SK-N-SH (cell line): ENCODE measurements at regions of chr2 and their contacts with region 1.

Region 1: DNA sequence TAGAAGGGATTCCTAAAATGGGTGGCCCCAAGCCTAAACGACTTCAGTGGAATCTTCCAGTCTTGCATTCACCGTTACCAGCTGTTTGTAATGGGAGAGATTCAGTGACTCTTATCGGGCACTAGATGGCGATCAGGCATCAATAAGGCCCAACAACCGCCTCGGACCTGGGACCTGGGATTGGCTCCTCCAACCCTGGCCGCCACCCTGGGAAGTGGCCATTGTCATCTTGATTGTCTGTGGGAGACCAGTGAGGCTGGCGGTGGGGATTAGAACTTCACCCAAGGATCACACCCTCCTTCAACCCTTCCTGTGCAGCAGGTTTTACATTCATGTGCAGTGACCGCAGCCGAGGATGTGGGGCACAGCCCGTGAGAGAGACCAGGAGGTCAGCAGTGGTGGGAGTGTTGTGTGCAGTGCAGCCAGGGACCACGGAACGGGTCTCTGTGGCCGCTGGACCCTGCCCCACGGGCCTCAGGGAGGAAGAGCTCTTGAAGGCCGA is 85.3 kb downstream of the SPP2 start:
- DNase-seq: peak; percentile 83
- H3K4me3 ChIP-seq: no peak overlapping the region; a peak in 1 of 4 replicates
- H3K27ac ChIP-seq: no peak overlapping the region
- H3K4me1 ChIP-seq: peaks cover 4 to 6% of the 10 kb centered on the region in 2 experiments; a peak in 1 of 4 replicates
- H3K27me3 ChIP-seq: no peaks in the 10 kb centered on the region
- CTCF ChIP-seq: peak; percentile 90
- EP300 ChIP-seq: no peak
- RAD21 ChIP-seq: peak; percentile 97

Region 2: DNA sequence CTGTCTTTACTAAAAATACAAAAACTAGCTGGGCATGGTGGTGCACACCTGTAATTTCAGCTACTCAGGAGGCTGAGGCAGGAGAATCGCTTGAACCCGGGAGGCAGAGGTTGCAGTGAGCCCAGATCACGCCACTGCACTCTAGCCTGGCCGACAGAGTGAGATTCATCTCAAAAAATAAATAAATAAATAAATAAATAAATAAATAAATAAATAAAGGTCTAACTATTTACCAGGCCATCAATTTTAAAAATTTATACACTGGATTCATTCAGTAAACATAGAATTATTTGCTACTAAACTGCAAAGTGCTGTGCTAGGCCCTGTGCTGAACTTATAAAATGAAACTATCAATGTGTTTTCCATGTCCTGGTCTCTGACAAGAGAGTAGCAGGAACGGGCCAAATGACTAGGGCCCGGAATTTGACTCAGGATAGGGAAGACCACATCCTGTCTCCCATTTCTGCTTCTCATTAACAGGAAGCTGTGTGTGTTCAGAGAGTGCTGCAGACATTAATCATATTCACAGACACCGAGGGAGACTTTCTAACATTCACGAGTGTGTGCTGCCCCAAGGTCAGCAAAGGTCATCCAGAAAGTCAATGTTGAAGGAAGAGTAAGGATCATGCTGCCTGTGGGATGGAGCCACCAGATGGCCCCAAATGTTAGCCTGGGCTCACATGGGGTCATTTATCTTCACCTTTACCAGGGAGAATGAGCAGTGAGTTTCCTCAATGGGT is 10.5 kb after region 1 on chr2:
- CTCF ChIA-PET with region 1: interaction called, 18 read pairs
- POLR2A ChIA-PET with region 1: no interaction called
- DNase-seq: no peak
- H3K4me3 ChIP-seq: no peak overlapping the region
- H3K27ac ChIP-seq: peak overlapping the region; percentile 55 to 85
- H3K4me1 ChIP-seq: peaks cover 3 to 8% of the 10 kb centered on the region in 2 experiments; a peak in 3 of 4 replicates
- H3K27me3 ChIP-seq: no peaks in the 10 kb centered on the region
- CTCF ChIP-seq: peak; percentile 39
- EP300 ChIP-seq: peak; percentile 51 to 93
- RAD21 ChIP-seq: 0 out of 2 replicates have a peak, but pooled peaks have one; percentile 27

Region 3: DNA sequence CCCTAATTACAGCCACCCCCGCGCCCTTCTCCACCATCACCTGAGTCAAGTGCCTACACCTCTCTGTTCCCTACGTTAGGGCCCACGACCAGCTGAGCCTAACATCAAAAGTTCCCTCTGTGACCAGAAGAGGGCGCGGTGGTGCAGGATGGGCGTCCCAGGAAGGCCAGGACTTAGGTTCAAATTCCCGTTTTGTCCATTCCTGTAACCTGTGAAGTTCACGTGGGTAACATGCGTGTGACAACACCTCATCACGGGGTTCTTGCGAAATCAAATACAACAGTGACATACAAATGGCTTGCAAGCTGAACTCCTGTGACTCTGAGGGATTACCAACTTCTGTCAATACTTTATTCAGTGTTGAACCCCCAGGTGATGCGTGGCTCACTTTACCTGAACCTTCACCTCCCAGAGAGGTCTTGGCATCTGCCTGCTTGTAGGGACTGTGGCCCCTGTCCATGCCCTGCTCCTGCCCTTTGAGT is 153.2 kb after region 1 on chr2:
- CTCF ChIA-PET with region 1: interaction called, 28 read pairs
- POLR2A ChIA-PET with region 1: no interaction called
- DNase-seq: peak; percentile 67
- H3K4me3 ChIP-seq: no peak overlapping the region; a peak in 1 of 4 replicates
- H3K27ac ChIP-seq: no peak overlapping the region
- H3K4me1 ChIP-seq: peaks cover 13 to 21% of the 10 kb centered on the region in 2 experiments; a peak in 2 of 4 replicates
- H3K27me3 ChIP-seq: no peaks in the 10 kb centered on the region
- CTCF ChIP-seq: peak; percentile 65
- EP300 ChIP-seq: no peak
- RAD21 ChIP-seq: peak; percentile 85

Region 4: DNA sequence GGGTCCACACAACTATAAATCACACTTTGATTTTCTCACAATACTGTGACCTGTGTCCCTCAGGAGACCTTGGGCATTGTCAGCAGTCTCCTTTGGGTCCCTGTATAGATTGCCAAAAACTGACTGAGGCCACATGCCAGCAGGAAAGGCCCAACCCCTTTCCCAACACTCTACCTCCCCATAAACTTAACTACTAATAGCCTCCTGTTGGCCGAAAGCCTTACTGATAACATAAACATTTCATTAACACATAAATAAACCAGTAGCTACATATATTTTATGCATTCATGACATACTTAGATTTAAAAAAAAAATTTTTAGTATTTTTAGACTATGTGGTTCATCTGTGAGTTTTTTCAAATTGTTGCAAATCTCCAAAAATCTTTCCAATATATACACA is 207.6 kb after region 1 on chr2:
- CTCF ChIA-PET with region 1: no interaction called
- POLR2A ChIA-PET with region 1: no interaction called
- DNase-seq: no peak
- H3K4me3 ChIP-seq: no peak overlapping the region
- H3K27ac ChIP-seq: no peak overlapping the region
- H3K4me1 ChIP-seq: peaks cover 0 to 5% of the 10 kb centered on the region in 2 experiments; a peak in 1 of 4 replicates
- H3K27me3 ChIP-seq: no peaks in the 10 kb centered on the region
- CTCF ChIP-seq: no peak
- EP300 ChIP-seq: no peak
- RAD21 ChIP-seq: no peak

Region 5: GRCh38 chr2:234512884-234513669 is 377.3 kb after region 1 on chr2:
- CTCF ChIA-PET with region 1: interaction called, 10 read pairs
- POLR2A ChIA-PET with region 1: no interaction called
- DNase-seq: peak; percentile 64
- H3K4me3 ChIP-seq: no peak overlapping the region
- H3K27ac ChIP-seq: peak overlapping the region in 1 of 2 experiments; percentile 41; a peak in 2 of 4 replicates
- H3K4me1 ChIP-seq: peaks cover 0 to 6% of the 10 kb centered on the region in 2 experiments; a peak in 1 of 4 replicates
- H3K27me3 ChIP-seq: no peaks in the 10 kb centered on the region
- CTCF ChIP-seq: no peak
- EP300 ChIP-seq: no peak
- RAD21 ChIP-seq: no peak

Region 6: DNA sequence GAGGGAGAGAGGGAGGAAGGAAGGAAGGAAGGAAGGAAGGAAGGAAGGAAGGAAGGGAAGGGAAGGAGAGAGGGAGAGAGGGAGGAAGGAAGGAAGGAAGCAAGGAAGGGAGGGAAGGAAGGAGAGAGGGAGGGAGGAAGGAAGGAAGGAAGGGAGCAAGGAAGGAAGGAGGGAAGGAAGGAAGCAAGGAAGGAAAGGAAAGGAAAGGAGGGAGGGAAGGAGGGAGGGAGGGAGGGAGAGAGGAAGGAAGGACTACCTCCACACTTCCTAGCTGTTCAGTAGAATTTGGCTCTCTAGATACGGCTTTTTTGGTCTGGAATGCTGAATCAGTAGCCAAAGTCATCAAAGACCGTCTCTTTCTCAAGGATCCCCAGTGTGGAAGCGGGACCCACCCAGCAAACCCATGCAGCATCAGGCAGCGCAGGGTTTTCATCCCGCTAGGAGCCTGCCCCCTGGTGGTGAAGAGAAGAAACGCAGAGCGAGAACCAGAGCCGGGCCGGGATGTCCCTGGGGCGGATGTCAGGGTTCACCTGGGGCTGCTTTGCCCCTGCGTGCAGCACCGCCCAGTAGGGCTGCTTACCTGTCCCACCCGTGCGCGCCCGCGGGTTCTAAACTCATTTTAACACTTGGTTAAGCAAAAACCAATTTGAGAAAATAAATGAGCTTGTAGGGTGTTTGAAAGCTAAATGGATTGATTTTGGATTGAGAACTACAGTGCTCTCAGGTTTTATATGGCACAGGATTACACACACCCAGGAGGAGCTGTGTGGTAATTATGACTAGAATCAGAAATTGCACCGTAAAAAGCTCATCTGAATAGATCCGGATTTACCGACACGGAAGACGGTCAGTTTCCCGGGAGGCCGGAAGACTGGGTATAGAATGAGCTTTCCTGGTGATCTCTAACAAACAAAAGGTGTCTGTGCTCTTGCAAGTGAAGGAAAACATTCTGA is 409.2 kb after region 1 on chr2:
- CTCF ChIA-PET with region 1: interaction called, 45 read pairs
- POLR2A ChIA-PET with region 1: no interaction called
- DNase-seq: peak; percentile 86
- H3K4me3 ChIP-seq: peak overlapping the region in 1 of 2 experiments; percentile 28; a peak in 1 of 4 replicates
- H3K27ac ChIP-seq: no peak overlapping the region
- H3K4me1 ChIP-seq: no peaks in the 10 kb centered on the region; a peak in 1 of 4 replicates
- H3K27me3 ChIP-seq: no peaks in the 10 kb centered on the region
- CTCF ChIP-seq: peak; percentile 88
- EP300 ChIP-seq: no peak
- RAD21 ChIP-seq: peak; percentile 83